H1 (cell line): ENCODE measurements at regions of chr2 and their contacts with region 1.

Region 1: DNA sequence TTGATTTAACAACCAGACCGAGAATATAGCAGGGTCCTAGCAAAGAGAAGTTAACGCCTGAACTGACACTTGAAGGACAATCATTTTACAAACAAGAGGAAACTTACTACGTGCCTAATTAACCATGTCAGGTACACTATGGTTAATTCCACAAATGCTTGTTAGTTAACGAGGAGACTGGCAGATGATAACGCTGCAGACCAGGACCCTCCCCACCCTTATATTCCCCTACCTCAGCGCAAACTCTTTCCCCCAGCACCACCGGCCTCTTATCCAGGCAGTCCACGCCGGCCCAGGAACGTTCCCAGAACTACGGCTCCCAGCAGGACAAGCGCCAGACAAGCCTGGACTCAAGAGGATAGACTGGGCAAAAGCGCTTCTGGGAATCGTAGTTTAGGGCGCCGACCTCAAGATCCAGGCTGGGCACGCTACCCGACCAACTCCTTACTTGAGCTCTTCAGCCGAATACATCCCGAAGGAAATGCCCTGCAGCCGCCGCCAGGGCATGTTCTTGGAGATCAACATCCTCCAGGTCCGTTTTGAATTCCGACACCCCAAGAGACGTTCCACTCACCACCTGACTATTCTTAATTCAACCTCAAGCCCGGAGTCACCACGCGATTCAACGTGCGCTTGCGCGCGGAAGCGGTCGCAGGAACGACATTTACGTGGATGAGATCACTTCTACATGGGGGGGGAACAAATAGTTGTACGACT is at the start of gene POLR1A:
- DNase-seq: peak; percentile 76 to 85
- H3K4me3 ChIP-seq: peak within 1 kb of the TSS; percentile 96 to 99 (median 97)
- H3K27ac ChIP-seq: peak within 1 kb of the TSS; percentile 94
- H3K4me1 ChIP-seq: peaks cover 0 to 4% (median 0%) of the 10 kb centered on the region in 4 experiments; a peak in 1 of 7 replicates
- H3K27me3 ChIP-seq: no peaks in the 10 kb centered on the region
- CTCF ChIP-seq: no peak
- EP300 ChIP-seq: no peak
- POLR2A ChIP-seq: peak in 1 of 2 experiments; percentile 79; a peak in 1 of 3 replicates
- RAD21 ChIP-seq: no peak
- total RNA-seq, gene POLR1A: 58.1 and 58.2 TPM in 2 replicates

Region 2: GRCh38 chr2:86087936-86088850 is 17.2 kb before region 1 on chr2:
- CTCF ChIA-PET with region 1: interaction called, 16 read pairs
- POLR2A ChIA-PET with region 1: interaction called, 7 read pairs
- DNase-seq: no peak
- H3K4me3 ChIP-seq: no peak overlapping the region
- H3K27ac ChIP-seq: no peak overlapping the region
- H3K4me1 ChIP-seq: no peaks in the 10 kb centered on the region
- H3K27me3 ChIP-seq: no peaks in the 10 kb centered on the region
- CTCF ChIP-seq: peak; percentile 28 to 46 (median 38)
- EP300 ChIP-seq: no peak
- POLR2A ChIP-seq: no peak
- RAD21 ChIP-seq: peak in 1 of 2 experiments; percentile 29; a peak in 1 of 4 replicates

Region 3: DNA sequence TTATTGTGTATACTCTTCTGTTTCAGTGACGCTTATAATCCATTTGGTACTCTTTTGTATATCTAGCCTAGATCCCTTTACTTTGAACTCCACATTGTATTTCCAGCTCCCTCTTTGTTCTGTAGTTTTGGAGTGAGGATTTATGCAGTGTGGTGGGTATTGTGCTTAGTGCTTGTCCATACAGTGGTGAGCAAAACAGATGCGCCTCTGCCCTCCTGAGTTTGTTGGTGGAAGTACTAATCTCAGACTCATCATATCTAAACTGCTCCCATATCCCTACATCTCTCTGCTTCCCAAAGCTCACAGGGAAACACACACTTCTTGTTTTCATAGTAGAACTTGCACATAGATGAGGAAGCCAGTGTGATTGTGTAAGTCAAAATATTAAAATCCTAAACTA is 12.7 kb after region 1 on chr2:
- CTCF ChIA-PET with region 1: interaction called, 3 read pairs
- POLR2A ChIA-PET with region 1: interaction called, 119 read pairs
- DNase-seq: no peak
- H3K4me3 ChIP-seq: no peak overlapping the region
- H3K27ac ChIP-seq: no peak overlapping the region
- H3K4me1 ChIP-seq: peaks cover 0 to 8% (median 3%) of the 10 kb centered on the region in 4 experiments; a peak in 4 of 7 replicates
- H3K27me3 ChIP-seq: no peaks in the 10 kb centered on the region
- CTCF ChIP-seq: no peak
- EP300 ChIP-seq: no peak
- POLR2A ChIP-seq: no peak
- RAD21 ChIP-seq: no peak

Region 4: GRCh38 chr2:86195055-86195807 is 89.8 kb after region 1 on chr2 and contains the start of gene IMMT:
- CTCF ChIA-PET with region 1: no interaction called
- POLR2A ChIA-PET with region 1: interaction called, 12 read pairs
- DNase-seq: peak; percentile 87 to 92
- H3K4me3 ChIP-seq: peak within 1 kb of the TSS; percentile 64 to 96 (median 87)
- H3K27ac ChIP-seq: peak within 1 kb of the TSS; percentile 90
- H3K4me1 ChIP-seq: peaks cover 0 to 4% (median under 1%) of the 10 kb centered on the region in 4 experiments; a peak in 1 of 7 replicates
- H3K27me3 ChIP-seq: no peaks in the 10 kb centered on the region
- CTCF ChIP-seq: no peak
- EP300 ChIP-seq: no peak
- POLR2A ChIP-seq: peak; percentile 72 to 85; a peak in 2 of 3 replicates
- RAD21 ChIP-seq: no peak
- total RNA-seq, gene IMMT: 103 and 105 TPM in 2 replicates

Region 5: GRCh38 chr2:86238354-86238753 is 132.9 kb after region 1 on chr2:
- CTCF ChIA-PET with region 1: no interaction called
- POLR2A ChIA-PET with region 1: no interaction called
- DNase-seq: no peak
- H3K4me3 ChIP-seq: no peak overlapping the region
- H3K27ac ChIP-seq: no peak overlapping the region
- H3K4me1 ChIP-seq: no peaks in the 10 kb centered on the region; a peak in 1 of 7 replicates
- H3K27me3 ChIP-seq: no peaks in the 10 kb centered on the region
- CTCF ChIP-seq: no peak
- EP300 ChIP-seq: no peak
- POLR2A ChIP-seq: no peak
- RAD21 ChIP-seq: no peak

Region 6: DNA sequence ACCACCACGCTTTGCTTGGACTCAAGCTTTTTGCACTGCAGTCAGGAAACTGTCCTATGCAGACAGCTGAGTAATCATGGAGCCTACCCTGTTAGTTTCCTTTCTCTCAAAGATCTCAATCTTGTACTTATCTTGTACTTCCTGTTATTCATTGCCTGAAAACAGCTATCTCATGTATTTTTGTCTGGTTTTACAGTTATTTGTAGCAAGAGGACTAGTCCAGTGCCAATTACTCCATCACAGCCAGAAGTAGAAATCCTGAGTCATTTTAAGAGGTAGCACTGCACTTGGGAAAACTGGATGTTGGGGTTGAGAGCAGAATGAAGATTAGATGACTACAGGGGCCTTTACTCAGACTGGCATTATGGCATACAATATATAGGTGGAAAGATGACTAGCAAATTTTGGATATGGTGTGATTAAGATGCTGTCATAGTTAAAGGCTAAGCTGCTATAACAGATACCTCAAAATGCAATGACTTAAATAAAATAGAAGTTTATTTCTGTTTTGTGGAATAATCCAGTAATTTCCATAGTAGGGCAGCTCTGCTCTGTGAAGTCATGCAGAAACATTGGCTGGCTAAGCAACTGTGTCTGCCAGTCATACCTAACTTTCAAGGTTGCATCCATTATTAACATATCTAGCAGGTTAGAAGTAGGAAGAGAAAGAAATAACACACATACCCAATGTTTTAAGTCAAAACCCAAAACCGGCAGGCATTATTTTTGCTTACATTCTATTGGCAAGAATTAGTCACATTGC is 478.9 kb after region 1 on chr2:
- CTCF ChIA-PET with region 1: no interaction called
- POLR2A ChIA-PET with region 1: no interaction called
- DNase-seq: no peak
- H3K4me3 ChIP-seq: no peak overlapping the region
- H3K27ac ChIP-seq: no peak overlapping the region
- H3K4me1 ChIP-seq: no peaks in the 10 kb centered on the region
- H3K27me3 ChIP-seq: peaks cover 0 to 2% (median 0%) of the 10 kb centered on the region in 4 experiments; a peak in 1 of 7 replicates
- CTCF ChIP-seq: no peak
- EP300 ChIP-seq: no peak
- POLR2A ChIP-seq: no peak
- RAD21 ChIP-seq: no peak